Panc1 (cell line): ENCODE measurements at regions of chr4 and their contacts with region 1.

Region 1: GRCh38 chr4:75673027-75673958 is at the start of gene G3BP2:
- DNase-seq: peak; percentile 91
- ATAC-seq: peak; percentile 97
- H3K4me3 ChIP-seq: peak within 1 kb of the TSS; percentile 94 to 97
- H3K27ac ChIP-seq: peak within 1 kb of the TSS; percentile 98
- H3K4me1 ChIP-seq: peaks cover 25% of the 10 kb centered on the region; the same call in 1 of the 2 replicates
- H3K27me3 ChIP-seq: no peaks in the 10 kb centered on the region
- CTCF ChIP-seq: no peak
- total RNA-seq, gene G3BP2: 146 TPM

Region 2: DNA sequence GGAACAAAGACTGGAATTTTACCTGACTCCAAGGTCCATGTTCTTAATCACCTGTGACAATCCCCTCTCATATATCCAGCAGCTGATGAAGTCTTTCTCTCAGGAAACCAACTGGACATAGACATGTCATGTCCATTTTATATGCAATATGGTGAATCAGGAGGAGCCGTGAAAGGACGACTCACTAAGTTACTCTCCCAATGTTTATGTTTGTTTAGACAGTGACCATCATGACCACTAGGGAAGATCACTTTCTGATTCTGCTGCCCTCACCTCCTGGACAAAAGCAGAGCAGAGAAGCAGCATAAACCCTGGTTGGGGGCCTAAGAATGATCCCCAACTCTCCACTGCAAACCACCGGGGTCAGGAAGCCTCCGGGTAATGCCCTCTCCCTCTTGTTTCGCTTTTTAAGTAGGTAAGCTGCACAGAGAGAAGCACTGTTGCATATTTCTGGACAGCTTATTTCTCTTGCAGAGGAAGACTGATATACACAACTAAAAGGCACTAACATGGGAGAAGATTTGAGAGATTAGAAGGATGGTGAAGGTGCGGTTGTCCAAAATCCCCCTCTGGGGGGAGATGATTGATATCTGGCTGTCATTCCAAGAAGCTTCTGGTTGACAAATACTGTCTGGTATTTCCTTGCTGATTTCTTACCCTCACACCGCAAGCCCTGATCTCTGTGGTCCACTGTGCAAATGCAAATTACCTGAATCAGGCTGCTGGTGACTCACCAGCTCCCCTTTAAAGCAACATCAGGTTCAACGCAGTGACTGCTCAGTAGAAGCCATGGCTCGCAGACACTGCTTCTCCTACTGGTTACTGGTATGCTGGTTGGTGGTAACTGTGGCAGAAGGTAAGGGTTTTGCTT is 117.8 kb before region 1 on chr4 and contains the start of gene ODAPH:
- CTCF ChIA-PET with region 1: no interaction called
- POLR2A ChIA-PET with region 1: interaction called, 17 read pairs
- in situ Hi-C with region 1: no loop called
- intact Hi-C with region 1: no loop called
- DNase-seq: no peak
- ATAC-seq: no peak
- H3K4me3 ChIP-seq: no peak within 1 kb of the TSS
- H3K27ac ChIP-seq: no peak within 1 kb of the TSS
- H3K4me1 ChIP-seq: no peaks in the 10 kb centered on the region
- H3K27me3 ChIP-seq: peaks cover 3% of the 10 kb centered on the region; the same call in 1 of the 2 replicates
- CTCF ChIP-seq: peak; percentile 13; the same call in 1 of the 2 replicates
- total RNA-seq, gene ODAPH: not detected

Region 3: DNA sequence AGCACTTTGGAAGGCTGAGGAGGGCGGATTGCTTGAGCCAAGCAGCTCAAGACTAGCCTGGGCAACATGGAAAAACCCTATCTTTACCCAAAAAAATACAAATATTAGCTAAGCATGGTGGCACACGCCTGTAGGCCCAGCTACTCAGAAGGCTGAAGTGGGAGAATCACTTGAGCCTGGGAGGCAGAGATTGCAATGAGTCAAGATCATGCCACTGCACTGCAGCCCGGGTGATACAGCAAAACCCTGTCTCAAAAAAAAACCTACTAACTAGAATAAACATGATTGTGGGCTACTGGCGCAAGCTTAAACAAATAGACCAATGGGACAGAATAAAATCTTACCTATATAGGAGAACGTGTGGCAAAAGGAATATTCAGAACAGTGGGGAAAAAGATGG is 50.3 kb before region 1 on chr4:
- CTCF ChIA-PET with region 1: no interaction called
- POLR2A ChIA-PET with region 1: interaction called, 13 read pairs
- in situ Hi-C with region 1: no loop called
- intact Hi-C with region 1: no loop called
- DNase-seq: no peak
- ATAC-seq: no peak
- H3K4me3 ChIP-seq: no peak overlapping the region
- H3K27ac ChIP-seq: no peak overlapping the region
- H3K4me1 ChIP-seq: no peaks in the 10 kb centered on the region
- H3K27me3 ChIP-seq: no peaks in the 10 kb centered on the region
- CTCF ChIP-seq: no peak